ENCODE measurements at regions of chr2 and their contacts with region 1.

Region 1: DNA sequence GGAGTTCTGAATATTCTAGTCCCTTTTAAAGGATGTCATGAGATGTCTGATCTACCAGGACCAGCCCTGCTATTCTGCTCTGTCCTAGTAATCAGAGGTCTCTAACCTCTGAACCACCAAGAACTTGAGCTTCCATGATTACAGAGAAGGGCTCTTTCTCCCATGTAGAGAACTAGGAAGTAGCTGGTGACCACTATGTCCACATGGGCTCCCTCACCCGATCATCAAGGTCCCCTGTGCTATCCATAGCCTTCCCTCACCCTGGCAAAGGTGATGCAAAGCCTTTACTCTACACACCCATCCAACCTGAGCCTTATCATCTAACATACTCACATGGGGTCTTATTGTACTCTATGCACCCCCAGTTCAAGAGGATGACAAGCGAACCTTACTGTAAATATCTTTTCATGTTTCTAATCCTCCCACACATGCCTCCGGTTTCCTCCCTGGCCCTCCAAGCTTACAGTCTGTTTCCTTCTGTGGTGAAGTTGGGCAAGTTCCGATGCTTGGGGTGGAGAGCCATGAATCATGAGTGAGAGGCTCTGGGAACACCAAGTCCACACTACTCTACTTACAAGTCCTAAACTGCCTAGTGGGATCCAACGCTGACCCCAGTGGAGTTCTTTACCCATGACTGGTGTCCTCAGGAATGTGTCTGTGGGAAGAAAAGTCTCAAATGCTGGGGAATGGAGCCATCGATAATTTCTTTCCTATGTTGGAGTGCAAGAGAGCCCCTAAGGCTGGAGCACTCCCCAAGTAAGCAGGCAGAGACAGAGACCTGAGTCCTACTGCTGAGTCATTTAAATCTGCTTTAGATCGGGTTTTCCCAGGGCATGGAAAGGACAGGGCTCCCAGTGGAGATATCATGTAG is 73.3 kb upstream of the KLF7 start:
- DNase-seq: peak; percentile 77 to 90 (median 78)
- H3K4me3 ChIP-seq: peak overlapping the region in 1 of 3 experiments; percentile 42
- H3K4me3 Mint-ChIP-seq: peak overlapping the region; percentile 52 to 55
- H3K27ac ChIP-seq: peak overlapping the region; percentile 65 to 81
- H3K27ac Mint-ChIP-seq: peak overlapping the region in 2 of 7 donors; percentile 90 to 95
- H3K4me1 ChIP-seq: peaks cover 69 to 75% of the 10 kb centered on the region in 2 donors
- H3K4me1 Mint-ChIP-seq: peaks cover 8% of the 10 kb centered on the region
- H3K27me3 ChIP-seq: no peaks in the 10 kb centered on the region
- H3K27me3 Mint-ChIP-seq: no peaks in the 10 kb centered on the region
- CTCF ChIP-seq: no peak

Region 2: DNA sequence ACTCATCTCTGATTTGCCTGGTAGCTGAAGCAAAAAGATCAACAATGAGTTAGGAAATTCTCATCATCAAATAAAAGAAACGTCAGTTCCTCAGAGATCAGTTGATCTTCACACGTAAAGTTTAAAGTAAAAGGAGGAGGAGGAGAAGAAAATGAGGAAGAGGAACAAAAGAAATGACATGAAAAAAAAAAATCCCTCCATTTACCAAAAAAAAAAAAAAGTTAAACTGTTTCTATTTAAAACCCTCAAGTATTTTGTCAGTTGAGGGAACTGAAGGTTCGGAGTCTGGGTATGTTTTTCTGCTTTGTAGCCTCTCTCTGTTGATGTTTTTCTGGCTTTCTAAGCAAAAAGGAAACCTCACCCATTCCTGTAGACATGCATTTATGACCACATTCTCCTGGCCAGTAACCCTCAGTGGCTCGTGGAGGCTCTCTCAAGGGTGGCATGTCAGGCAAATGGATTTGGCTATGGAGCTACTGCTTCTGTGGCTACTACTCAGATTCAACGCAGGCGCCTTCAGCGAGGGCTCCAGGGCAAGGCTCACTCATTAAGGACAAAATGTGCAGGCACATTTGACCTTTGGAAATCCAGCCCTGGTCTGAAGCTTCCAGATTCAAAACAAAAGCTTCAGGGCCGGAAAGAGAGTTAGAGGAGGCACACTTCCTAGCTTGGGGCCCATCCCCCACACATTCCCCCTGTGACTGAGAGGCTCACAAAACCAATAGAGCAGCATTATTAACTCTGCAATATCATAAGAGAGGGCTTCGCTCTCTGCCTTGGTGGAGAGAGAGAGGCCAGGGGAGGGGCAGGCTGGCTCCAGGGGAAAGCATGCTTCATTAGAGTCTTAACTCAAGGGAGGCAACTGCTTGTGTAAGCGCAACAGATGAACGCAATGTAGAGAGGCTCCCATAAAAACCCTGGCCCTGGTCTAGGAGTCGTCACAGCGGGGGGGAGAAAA is 95.6 kb before region 1 on chr2:
- intact Hi-C with region 1: loop called in 1 of 2 experiments (anchors 5 kb)
- DNase-seq: peak; percentile 73 to 85 (median 82)
- H3K4me3 ChIP-seq: peak overlapping the region; percentile 23 to 67 (median 35)
- H3K4me3 Mint-ChIP-seq: peak overlapping the region; percentile 70 to 76
- H3K27ac ChIP-seq: peak overlapping the region; percentile 97 to 99
- H3K27ac Mint-ChIP-seq: peak overlapping the region; percentile 96 to 100 (median 97)
- H3K4me1 ChIP-seq: peaks cover 72 to 75% of the 10 kb centered on the region in 2 donors
- H3K4me1 Mint-ChIP-seq: peaks cover 78% of the 10 kb centered on the region
- H3K27me3 ChIP-seq: no peaks in the 10 kb centered on the region
- H3K27me3 Mint-ChIP-seq: no peaks in the 10 kb centered on the region
- CTCF ChIP-seq: no peak

Region 3: DNA sequence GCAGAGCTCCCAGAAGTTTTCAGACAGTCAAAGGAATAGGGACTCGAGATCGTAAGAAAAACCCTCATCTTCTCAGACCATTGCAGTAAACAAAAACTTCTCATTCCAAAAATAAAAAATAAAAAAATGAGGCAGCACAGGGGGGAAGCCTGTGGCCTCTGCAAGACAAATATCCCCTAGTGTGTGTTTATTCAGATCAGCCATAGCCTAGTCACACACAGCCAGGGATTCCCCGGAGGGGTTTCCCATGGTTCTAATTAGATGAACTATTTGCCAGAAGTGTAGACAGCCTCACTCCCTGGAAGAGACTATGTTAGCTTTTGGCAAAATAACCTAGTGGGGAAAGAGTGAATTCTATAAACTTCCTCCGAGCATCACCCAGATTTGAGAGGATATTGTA is 49.6 kb after region 1 on chr2:
- intact Hi-C with region 1: no loop called
- DNase-seq: peak in 1 of 3 donors; percentile 33
- H3K4me3 ChIP-seq: no peak overlapping the region
- H3K4me3 Mint-ChIP-seq: no peak overlapping the region
- H3K27ac ChIP-seq: no peak overlapping the region
- H3K27ac Mint-ChIP-seq: no peak overlapping the region
- H3K4me1 ChIP-seq: peaks cover under 1 to 6% of the 10 kb centered on the region in 2 donors
- H3K4me1 Mint-ChIP-seq: peaks cover 3% of the 10 kb centered on the region
- H3K27me3 ChIP-seq: no peaks in the 10 kb centered on the region
- H3K27me3 Mint-ChIP-seq: peaks cover 0 to 1% (median 0%) of the 10 kb centered on the region in 3 donors
- CTCF ChIP-seq: no peak

Region 4: GRCh38 chr2:207905546-207905945 is 666.5 kb after region 1 on chr2:
- intact Hi-C with region 1: no loop called
- DNase-seq: no peak
- H3K4me3 ChIP-seq: no peak overlapping the region
- H3K4me3 Mint-ChIP-seq: no peak overlapping the region
- H3K27ac ChIP-seq: no peak overlapping the region
- H3K27ac Mint-ChIP-seq: no peak overlapping the region
- H3K4me1 ChIP-seq: no peaks in the 10 kb centered on the region
- H3K4me1 Mint-ChIP-seq: no peaks in the 10 kb centered on the region
- H3K27me3 ChIP-seq: no peaks in the 10 kb centered on the region
- H3K27me3 Mint-ChIP-seq: no peaks in the 10 kb centered on the region
- CTCF ChIP-seq: no peak

Measured in CD14-positive monocyte (primary cell).